OCI-LY7 (cell line): ENCODE measurements at regions of chr11 and their contacts with region 1.

Region 1: DNA sequence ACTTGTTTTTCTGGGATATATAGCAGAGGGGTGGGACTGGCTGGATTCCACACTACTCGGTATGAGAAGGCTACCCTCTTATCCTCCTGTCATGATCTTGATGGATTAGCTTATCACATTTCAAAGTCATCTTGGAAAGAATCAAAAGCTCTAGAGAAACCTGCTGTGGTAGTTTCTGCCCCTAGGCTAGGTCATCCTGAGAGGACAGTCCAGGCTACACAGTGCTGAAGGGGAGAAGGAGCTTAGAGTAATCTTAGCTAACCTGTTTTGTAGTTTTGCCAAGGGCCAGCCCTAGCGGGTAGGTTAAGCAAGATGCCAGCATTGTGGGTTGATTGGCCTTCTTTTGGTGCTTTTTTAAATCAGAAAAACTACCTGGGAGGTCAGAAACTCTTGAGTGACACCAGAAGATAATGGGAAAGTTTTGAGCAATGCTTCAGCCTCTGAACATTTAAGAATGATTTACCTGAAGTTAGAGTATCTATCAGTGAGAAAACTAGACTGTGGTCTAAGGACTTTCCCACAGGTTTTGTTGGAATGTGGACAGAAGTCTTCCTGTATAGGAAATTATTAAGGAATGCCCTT is 21.3 kb downstream of the PIWIL4 start:
- DNase-seq: no peak
- H3K4me3 ChIP-seq: no peak overlapping the region
- H3K27ac ChIP-seq: no peak overlapping the region
- H3K4me1 ChIP-seq: no peaks in the 10 kb centered on the region
- CTCF ChIP-seq: no peak

Region 2: DNA sequence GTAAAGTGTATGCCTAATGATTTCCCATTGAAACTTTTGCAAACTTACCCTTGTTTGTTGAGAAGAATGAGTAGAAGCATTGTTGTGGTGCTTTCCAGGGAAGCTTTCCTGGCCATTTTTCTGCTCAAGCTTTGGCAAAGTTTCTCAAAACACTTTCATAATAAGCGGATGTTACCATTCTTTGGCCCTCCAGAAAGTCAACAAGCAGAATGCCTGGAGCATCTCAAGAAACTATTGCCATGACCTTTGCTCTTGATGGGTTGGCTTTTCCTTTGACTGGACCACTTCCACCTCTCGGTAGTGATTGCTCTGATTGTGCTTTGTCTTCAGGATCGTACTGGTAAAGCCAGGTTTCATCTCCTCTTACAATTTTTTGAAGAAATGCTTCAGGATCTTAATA is 10.6 kb before region 1 on chr11:
- CTCF ChIA-PET with region 1: no interaction called
- POLR2A ChIA-PET with region 1: interaction called, 11 read pairs
- intact Hi-C with region 1: no loop called
- DNase-seq: no peak
- H3K4me3 ChIP-seq: no peak overlapping the region
- H3K27ac ChIP-seq: no peak overlapping the region
- H3K4me1 ChIP-seq: no peaks in the 10 kb centered on the region
- CTCF ChIP-seq: no peak

Region 3: GRCh38 chr11:94602430-94603372 is 14.2 kb after region 1 on chr11:
- CTCF ChIA-PET with region 1: no interaction called
- POLR2A ChIA-PET with region 1: interaction called, 15 read pairs
- intact Hi-C with region 1: no loop called
- DNase-seq: peak; percentile 75
- H3K4me3 ChIP-seq: peak overlapping the region; percentile 25
- H3K27ac ChIP-seq: peak overlapping the region; percentile 61
- H3K4me1 ChIP-seq: peaks cover 19% of the 10 kb centered on the region
- CTCF ChIP-seq: peak; percentile 75